Posterior cingulate gyrus (tissue), 11 donors: ENCODE measurements at regions of chr4 and their contacts with region 1.

Region 1: GRCh38 chr4:53908661-53909078 is 155.7 kb downstream of the CHIC2 start:
- DNase-seq: peak in 2 of 10 donors; percentile 13 to 30

Region 2: DNA sequence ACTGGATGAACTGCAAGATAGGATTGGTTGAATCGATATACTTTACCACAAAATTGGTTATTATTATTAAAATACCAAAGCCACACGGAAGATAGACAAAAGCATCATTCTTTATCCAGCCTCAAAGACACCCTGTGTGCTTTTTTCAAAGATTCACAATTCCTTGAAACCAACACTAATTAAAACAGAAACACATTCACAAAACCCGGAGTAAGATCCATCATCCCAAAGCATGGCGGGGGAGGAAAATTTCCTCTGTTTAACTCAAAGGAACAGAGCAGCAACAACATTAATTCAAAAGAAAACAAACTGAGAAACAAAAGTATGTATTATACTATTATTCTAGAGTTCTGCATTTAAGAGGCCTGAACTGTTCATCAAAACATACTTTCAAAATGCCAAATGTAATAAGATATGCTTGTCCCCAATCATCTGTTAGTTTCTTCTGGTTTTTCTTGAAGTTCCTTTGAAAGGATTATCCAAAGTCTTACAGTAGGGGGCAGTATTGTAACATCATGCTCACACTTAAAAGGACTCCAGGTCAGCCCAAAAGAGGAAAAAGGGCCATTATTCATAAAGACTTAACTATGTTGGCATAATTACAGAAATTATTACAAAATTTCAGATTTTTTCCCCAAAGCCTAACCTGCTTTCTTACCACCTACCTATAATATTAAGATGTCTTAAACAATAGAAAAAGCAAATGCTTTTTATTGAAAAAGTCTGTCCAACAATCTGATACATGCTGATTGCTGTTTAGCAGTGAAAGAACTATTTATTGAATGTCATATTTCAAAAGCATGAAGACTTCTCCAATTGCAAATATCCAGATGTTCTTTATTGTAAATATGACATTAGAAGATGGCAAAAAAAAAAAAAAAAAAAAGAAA is 711.5 kb before region 1 on chr4:
- intact Hi-C with region 1: loop called (anchors 5 kb)
- DNase-seq: no peak

Region 3: DNA sequence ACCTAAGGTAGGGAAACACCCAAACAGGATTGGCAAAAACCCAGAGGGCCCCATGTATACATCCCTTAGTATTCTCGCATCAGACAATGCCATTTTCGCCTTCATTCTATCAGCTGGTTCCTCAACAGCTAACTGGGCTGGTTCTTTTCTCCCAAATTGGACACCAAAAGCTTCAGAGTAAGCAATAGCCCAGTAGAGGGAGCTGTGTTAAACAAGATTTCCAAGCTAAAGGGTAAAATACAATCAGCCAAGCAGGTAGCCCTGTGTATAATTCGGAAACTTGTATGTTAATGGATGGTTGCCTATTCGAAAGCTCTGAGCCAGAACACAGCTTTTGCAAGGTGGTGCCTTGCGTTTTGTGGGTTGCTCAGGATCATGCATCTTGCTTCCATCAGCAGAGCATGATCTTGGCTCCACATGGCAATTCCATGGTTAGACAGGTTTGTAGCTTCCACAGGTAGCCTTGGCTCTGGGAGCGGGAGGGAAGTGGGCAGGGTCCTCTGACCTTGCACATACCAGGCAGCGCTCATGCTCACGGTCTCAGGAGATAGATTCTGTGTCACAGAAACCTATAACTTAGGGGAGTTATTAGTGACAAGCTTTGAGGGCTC is 202.1 kb before region 1 on chr4:
- intact Hi-C with region 1: loop called (anchors 5 kb)
- DNase-seq: no peak

Region 4: GRCh38 chr4:53717064-53717549 is 191.6 kb before region 1 on chr4:
- intact Hi-C with region 1: no loop called
- DNase-seq: no peak

Region 5: GRCh38 chr4:54005475-54005874 is 96.8 kb after region 1 on chr4:
- intact Hi-C with region 1: no loop called
- DNase-seq: no peak

Region 6: DNA sequence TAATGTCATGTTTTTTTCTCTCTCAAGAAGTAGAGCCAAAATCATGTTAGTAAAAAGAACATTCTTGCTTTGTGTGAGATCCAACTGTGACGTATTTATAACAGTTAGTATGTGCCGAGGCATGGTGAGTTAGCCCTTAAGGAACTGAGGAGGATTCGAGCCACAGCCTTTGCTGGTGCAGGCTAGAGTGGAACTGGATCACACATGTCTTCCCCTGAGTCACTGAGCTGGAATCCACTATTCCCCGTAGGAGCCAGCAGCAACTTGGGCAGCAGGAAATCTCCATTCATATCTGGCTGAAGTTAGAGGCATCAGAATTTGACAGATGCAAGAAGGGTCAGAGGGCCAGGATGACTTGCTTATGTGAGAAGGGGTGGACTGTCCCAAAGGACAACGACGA is 604.5 kb after region 1 on chr4:
- intact Hi-C with region 1: no loop called
- DNase-seq: no peak